Ascending aorta (tissue), 2 donors: ENCODE measurements at regions of chr5 and their contacts with region 1.

Region 1: GRCh38 chr5:148826053-148826738 is at the start of gene ADRB2:
- DNase-seq: peak; percentile 92 to 98
- H3K4me3 ChIP-seq: peak within 1 kb of the TSS; percentile 59 to 71
- H3K27ac ChIP-seq: peak within 1 kb of the TSS; percentile 77 to 85
- H3K4me1 ChIP-seq: peaks cover 0 to 11% of the 10 kb centered on the region in 2 donors
- H3K27me3 ChIP-seq: no peaks in the 10 kb centered on the region
- CTCF ChIP-seq: no peak
- total RNA-seq, gene ADRB2: 11.2 TPM

Region 2: DNA sequence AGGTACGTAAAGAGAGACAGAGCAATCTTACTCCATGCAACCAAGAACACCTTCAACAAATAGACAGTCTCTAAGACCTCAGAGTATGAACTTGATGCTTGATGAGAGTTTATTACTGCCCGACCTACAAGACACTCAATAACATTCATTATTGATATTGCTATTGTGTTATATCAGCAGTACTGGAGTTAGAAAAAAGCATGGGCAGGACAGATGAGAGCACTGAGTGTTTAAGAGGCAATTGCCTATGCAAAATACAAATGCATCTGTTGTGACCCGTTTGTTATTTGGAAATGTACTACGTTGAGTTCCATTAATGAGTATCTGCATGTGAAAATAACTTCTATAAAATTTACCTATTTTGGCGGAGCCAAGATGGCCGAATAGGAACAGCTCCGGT is 596.0 kb before region 1 on chr5:
- intact Hi-C with region 1: no loop called
- DNase-seq: no peak
- H3K4me3 ChIP-seq: no peak overlapping the region
- H3K27ac ChIP-seq: no peak overlapping the region
- H3K4me1 ChIP-seq: no peaks in the 10 kb centered on the region
- H3K27me3 ChIP-seq: no peaks in the 10 kb centered on the region
- CTCF ChIP-seq: no peak

Region 3: DNA sequence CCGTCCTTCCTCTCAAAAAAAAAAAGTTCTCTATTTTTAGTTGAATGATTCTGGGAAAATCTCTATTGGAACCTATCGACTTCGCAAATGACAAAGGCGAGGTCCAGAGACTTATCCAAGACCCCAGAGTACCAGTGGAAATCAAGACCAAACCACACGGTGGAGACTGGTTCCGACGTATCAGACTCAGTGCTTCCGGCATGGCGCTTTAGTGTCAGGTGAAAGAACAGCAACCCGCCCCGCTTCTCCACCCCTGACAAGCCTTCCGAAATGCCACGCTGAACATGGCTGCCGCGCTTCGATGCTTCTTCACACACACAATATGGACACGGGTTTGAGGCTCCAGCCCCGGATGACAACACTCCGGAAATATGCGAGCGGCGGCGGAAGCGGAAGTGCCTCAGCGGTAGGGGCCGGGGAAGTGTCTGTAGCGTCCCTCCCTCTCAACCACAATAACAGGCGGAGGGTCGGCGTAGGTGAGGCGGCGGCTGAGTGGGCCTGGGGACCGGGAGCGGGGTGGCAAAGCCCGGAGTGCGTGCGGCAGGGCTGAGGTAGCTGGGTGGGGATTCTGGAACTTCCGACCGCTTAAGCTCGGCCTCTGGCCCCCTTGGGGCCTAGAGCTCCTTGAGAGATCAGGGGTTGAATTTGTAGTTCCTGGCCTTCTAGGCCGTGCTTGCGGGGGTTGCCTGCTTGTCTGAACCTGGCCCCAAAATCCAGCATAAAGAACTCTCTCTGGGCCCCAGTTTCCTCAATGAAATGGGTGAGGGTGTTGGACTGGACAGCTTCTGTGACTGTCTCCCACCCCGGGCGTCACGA is 442.4 kb before region 1 on chr5 and contains the start of gene FBXO38:
- intact Hi-C with region 1: loop called (anchors 5 kb)
- DNase-seq: peak; percentile 96 to 99
- H3K4me3 ChIP-seq: peak within 1 kb of the TSS; percentile 84 to 99
- H3K27ac ChIP-seq: peak within 1 kb of the TSS; percentile 85 to 94
- H3K4me1 ChIP-seq: peaks cover 6 to 22% of the 10 kb centered on the region in 2 donors
- H3K27me3 ChIP-seq: no peaks in the 10 kb centered on the region
- CTCF ChIP-seq: peak in 2 of 3 experiments; percentile 5 to 7
- total RNA-seq, gene FBXO38: 12.1 TPM

Region 4: GRCh38 chr5:148904440-148904839 is 78.2 kb after region 1 on chr5:
- intact Hi-C with region 1: loop called (anchors 5 kb)
- DNase-seq: peak; percentile 42 to 84
- H3K4me3 ChIP-seq: no peak overlapping the region
- H3K27ac ChIP-seq: peak overlapping the region; percentile 66 to 81
- H3K4me1 ChIP-seq: peaks cover 5 to 25% of the 10 kb centered on the region in 2 donors
- H3K27me3 ChIP-seq: no peaks in the 10 kb centered on the region
- CTCF ChIP-seq: no peak

Region 5: DNA sequence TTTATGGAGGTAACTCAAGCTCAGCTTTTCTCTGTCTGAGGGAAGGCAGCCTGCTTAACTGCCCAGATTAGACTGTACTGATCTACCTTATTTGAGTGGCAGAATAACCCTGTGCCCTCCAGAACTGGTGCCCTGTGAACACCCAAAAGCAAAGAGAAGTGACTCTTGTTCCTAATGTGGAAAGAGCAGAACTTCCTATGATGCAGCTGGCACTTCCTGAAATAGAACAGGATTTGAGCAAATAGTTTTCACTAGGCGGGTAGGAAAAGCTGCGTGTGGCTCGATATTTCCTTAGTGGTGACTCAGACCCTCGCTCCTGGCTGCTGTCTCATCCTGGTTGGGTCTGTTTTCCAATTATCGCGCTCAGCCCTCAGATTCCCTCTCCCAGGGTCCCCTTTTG is 146.8 kb after region 1 on chr5:
- intact Hi-C with region 1: loop called (anchors 1 kb)
- DNase-seq: peak; percentile 38 to 89
- H3K4me3 ChIP-seq: peak overlapping the region in 1 of 2 donors; percentile 21
- H3K27ac ChIP-seq: peak overlapping the region; percentile 80 to 95
- H3K4me1 ChIP-seq: peaks cover 7 to 30% of the 10 kb centered on the region in 2 donors
- H3K27me3 ChIP-seq: no peaks in the 10 kb centered on the region
- CTCF ChIP-seq: no peak